IMR-90 (cell line): ENCODE measurements at regions of chr12 and their contacts with region 1.

Region 1: GRCh38 chr12:12505544-12506495 is 56.8 kb downstream of the DUSP16 start:
- DNase-seq: peak; percentile 65
- ATAC-seq: peak; percentile 48
- H3K4me3 ChIP-seq: peak overlapping the region; percentile 30; the same call in 1 of the 2 replicates
- H3K27ac ChIP-seq: peak overlapping the region; percentile 56; the same call in 1 of the 2 replicates
- H3K4me1 ChIP-seq: peaks cover 16% of the 10 kb centered on the region
- H3K27me3 ChIP-seq: no peaks in the 10 kb centered on the region
- CTCF ChIP-seq: no peak
- POLR2A ChIP-seq: no peak
- RAD21 ChIP-seq: no peak

Region 2: GRCh38 chr12:12398026-12398859 is 107.6 kb before region 1 on chr12:
- CTCF ChIA-PET with region 1: no interaction called
- POLR2A ChIA-PET with region 1: no interaction called
- dilution Hi-C with region 1: no loop called
- in situ Hi-C with region 1: no loop called
- intact Hi-C with region 1: loop called (anchors 5 kb)
- DNase-seq: peak; percentile 97
- ATAC-seq: peak; percentile 98
- H3K4me3 ChIP-seq: no peak overlapping the region
- H3K27ac ChIP-seq: peak overlapping the region; percentile 68; the same call in 1 of the 2 replicates
- H3K4me1 ChIP-seq: peaks cover 8% of the 10 kb centered on the region
- H3K27me3 ChIP-seq: no peaks in the 10 kb centered on the region
- CTCF ChIP-seq: 0 out of 2 replicates have a peak, but pooled peaks have one; percentile 14
- POLR2A ChIP-seq: no peak
- RAD21 ChIP-seq: peak; percentile 28

Region 3: GRCh38 chr12:12654691-12655460 is 149.1 kb after region 1 on chr12:
- CTCF ChIA-PET with region 1: no interaction called
- POLR2A ChIA-PET with region 1: no interaction called
- dilution Hi-C with region 1: no loop called
- in situ Hi-C with region 1: no loop called
- intact Hi-C with region 1: loop called (anchors 5 kb)
- DNase-seq: no peak
- ATAC-seq: no peak
- H3K4me3 ChIP-seq: no peak overlapping the region
- H3K27ac ChIP-seq: no peak overlapping the region
- H3K4me1 ChIP-seq: 0 out of 2 replicates have a peak, but pooled peaks cover 3% of the 10 kb centered on the region
- H3K27me3 ChIP-seq: no peaks in the 10 kb centered on the region
- CTCF ChIP-seq: no peak
- POLR2A ChIP-seq: no peak
- RAD21 ChIP-seq: no peak